WTC11 (cell line): ENCODE measurements at regions of chr20 and their contacts with region 1.

Region 1: GRCh38 chr20:41339507-41340326 is 904 bp upstream of the LPIN3 start:
- DNase-seq: peak; percentile 98
- ATAC-seq: peak; percentile 77
- H3K4me3 Mint-ChIP-seq: peak overlapping the region; percentile 80
- H3K27ac Mint-ChIP-seq: peak overlapping the region; percentile 92
- H3K4me1 Mint-ChIP-seq: peaks cover 6% of the 10 kb centered on the region
- H3K27me3 Mint-ChIP-seq: peaks cover 8% of the 10 kb centered on the region
- CTCF ChIP-seq: peak; percentile 99

Region 2: DNA sequence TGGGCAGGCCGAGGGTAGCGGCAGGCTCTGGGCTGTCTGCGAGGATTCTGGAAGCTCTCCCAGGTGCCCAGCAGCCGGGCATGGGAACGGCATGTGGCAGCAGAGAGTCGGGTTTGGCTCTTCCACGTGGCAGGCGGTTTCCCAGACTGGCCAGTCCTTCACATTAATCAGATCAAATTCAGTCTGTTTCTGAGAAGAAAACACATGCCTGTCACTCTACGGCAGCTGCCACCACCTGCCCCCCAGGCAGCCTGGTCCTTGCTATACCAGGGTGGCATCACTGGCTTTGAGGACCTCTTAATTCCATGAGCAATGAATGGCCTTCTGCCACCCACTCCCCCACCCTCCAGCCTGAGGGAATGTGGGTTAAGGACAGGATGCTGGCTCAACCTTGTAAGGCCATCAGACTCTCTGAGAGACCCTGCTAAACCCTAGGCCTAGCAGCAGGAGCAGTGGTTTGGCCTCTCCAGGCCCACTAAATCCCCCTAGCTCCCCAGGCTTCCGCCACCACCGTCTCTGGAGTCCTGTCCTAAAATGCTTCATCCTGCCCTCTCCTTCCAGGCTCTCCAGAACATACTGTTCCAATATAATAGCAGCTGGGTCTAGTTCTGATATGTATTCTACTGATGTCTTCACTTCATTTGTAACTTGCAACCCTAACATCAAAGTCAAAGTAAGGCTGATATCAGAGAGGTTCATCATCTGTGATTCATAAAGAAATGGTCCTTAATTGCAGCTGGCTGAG is 154.5 kb before region 1 on chr20:
- CTCF ChIA-PET with region 1: interaction called, 18 read pairs
- POLR2A ChIA-PET with region 1: no interaction called
- DNase-seq: no peak
- ATAC-seq: no peak
- H3K4me3 Mint-ChIP-seq: no peak overlapping the region
- H3K27ac Mint-ChIP-seq: no peak overlapping the region
- H3K4me1 Mint-ChIP-seq: no peaks in the 10 kb centered on the region
- H3K27me3 Mint-ChIP-seq: no peaks in the 10 kb centered on the region
- CTCF ChIP-seq: no peak

Region 3: GRCh38 chr20:41317536-41318270 is 22.0 kb before region 1 on chr20 and contains the start of gene ZHX3:
- CTCF ChIA-PET with region 1: interaction called, 12 read pairs
- POLR2A ChIA-PET with region 1: no interaction called
- DNase-seq: peak; percentile 97
- ATAC-seq: peak; percentile 99
- H3K4me3 Mint-ChIP-seq: peak within 1 kb of the TSS; percentile 75
- H3K27ac Mint-ChIP-seq: no peak within 1 kb of the TSS; the same call in 1 of the 2 replicates
- H3K4me1 Mint-ChIP-seq: peaks cover 15% of the 10 kb centered on the region
- H3K27me3 Mint-ChIP-seq: peaks cover 24% of the 10 kb centered on the region
- CTCF ChIP-seq: no peak
- total RNA-seq, gene ZHX3: 7.5 to 9.6 TPM (median 8.6 TPM) in 3 replicates

Region 4: DNA sequence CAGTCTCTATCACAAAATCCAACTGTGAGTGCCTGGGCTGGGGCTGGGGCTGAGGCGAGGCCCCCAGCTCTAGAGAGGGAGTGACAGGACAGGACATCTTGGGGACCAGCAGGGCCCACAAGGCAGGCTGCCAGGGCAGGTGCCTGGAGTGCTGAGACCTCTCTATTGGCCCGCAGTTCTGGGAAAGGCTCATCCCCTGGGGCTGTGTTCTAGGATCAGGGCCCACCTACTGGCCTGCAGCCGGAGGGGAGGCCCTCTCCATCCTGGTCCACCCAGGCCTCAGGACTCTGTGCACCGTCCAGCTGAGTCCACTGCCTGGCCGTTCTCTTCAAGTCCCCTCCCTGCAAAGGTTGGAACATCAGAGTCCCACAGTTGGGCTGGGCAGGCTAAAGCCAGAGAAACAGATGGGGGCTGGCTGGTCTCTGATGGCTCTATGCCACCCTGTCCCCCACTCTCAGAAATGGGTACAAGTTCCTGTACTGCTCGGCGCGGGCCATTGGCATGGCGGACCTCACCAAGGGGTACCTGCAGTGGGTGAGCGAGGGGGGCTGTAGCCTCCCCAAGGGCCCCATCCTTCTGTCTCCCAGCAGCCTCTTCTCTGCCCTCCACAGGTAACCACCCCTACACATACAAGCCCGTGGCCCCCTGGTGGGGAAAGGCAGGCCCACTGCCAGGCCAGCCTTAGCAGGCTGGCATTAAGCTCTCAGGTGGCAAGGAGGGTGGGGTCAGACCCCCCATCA is 17.9 kb after region 1 on chr20:
- CTCF ChIA-PET with region 1: interaction called, 17 read pairs
- POLR2A ChIA-PET with region 1: no interaction called
- DNase-seq: no peak
- ATAC-seq: no peak
- H3K4me3 Mint-ChIP-seq: no peak overlapping the region
- H3K27ac Mint-ChIP-seq: no peak overlapping the region
- H3K4me1 Mint-ChIP-seq: no peaks in the 10 kb centered on the region
- H3K27me3 Mint-ChIP-seq: no peaks in the 10 kb centered on the region
- CTCF ChIP-seq: no peak